Astrocyte of the cerebellum (primary cell): ENCODE measurements at regions of chr4 and their contacts with region 1.

Region 1: GRCh38 chr4:73170507-73171167 is 88.0 kb downstream of the ANKRD17 start:
- DNase-seq: no peak
- H3K4me3 ChIP-seq: no peak overlapping the region
- CTCF ChIP-seq: no peak

Region 2: GRCh38 chr4:73251384-73251783 is 80.7 kb after region 1 on chr4:
- in situ Hi-C with region 1: loop called (anchors 5 kb)
- DNase-seq: no peak
- H3K4me3 ChIP-seq: no peak overlapping the region
- CTCF ChIP-seq: no peak